Colonic mucosa (tissue), 4 donors: ENCODE measurements at regions of chr2 and their contacts with region 1.

Region 1: DNA sequence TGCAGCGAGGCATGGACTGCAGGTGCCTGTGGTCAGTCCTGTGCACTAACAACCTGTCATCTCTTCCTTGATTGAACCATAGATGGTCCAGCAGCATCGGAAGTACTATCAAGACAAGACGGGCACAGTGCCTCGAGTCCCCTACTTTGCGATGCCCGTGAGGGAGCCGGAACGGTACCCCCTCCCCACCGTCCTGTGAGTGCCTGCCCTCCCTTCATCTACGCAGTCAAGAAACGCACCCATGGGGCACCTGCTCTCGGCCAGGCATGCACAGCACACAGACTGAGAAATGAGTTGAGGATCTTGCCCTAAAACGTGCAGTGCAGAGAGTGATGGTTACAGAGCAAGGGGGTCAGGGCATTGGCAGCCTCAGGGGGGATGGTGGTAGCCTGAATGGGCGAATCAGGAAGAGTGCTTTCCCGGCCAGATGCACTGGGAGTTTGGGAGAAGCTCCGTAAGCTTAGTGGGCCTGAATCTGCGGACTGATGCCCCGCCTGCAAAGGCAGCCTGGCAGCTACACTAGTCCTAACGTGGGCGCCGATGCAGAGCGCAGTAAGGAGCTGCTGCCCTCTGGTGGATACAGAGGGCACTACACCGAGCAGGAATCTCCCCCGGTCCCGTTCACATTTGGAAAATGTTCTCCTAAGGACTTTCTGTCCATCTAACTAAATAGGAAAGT is 63.6 kb downstream of the CIB4 start:
- DNase-seq: peak; percentile 61
- H3K4me3 ChIP-seq: no peak overlapping the region
- H3K27ac ChIP-seq: no peak overlapping the region
- H3K4me1 ChIP-seq: no peaks in the 10 kb centered on the region
- H3K27me3 ChIP-seq: no peaks in the 10 kb centered on the region
- CTCF ChIP-seq: peak; percentile 98

Region 2: GRCh38 chr2:26503231-26503880 is 74.2 kb before region 1 on chr2:
- intact Hi-C with region 1: loop called (anchors 5 kb)
- DNase-seq: peak; percentile 88
- H3K4me3 ChIP-seq: peak overlapping the region; percentile 36
- H3K27ac ChIP-seq: no peak overlapping the region
- H3K4me1 ChIP-seq: peaks cover 6% of the 10 kb centered on the region
- H3K27me3 ChIP-seq: no peaks in the 10 kb centered on the region
- CTCF ChIP-seq: peak; percentile 92

Region 3: DNA sequence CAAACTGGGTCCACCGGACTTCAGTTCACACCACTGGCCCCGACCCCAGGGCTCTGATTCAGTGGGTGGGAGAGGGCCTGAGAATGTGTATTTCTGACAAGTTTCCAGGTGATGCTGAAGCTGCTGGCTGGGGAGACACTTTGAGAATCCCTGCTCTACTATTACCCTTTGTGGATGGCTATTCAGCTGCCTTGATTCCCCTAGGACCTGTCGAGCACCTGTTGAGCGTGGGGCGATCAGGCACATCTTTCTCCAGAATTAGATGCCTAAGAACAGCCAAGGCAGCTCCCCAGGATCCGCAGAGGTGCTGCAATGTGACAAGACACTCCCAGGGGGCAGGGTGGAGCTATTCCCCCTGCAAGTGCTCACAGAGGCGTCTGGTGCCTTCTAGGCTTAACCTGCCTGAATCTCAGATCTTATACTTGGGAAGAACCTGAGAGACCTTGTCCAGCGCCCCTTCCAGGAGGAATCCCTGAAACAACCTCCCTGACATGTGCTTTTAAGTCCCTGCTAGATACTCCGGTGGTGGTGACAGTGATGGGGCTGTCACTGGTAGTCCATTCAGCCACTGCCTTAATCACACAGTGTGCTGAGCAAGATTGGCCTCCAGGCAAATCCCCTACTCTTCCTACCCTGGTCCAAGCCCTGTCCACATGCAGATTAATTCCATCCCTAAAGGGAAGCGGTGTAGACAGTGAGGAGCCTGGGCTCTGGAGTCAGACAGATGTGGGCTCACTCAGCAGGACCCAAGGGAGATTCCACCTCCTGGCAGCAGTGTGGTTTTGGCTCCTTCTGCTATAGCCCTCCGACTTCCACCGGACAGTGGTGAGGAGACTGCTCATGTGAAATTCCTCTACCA is 56.3 kb before region 1 on chr2:
- intact Hi-C with region 1: loop called (anchors 5 kb)
- DNase-seq: no peak
- H3K4me3 ChIP-seq: no peak overlapping the region
- H3K27ac ChIP-seq: no peak overlapping the region
- H3K4me1 ChIP-seq: no peaks in the 10 kb centered on the region
- H3K27me3 ChIP-seq: no peaks in the 10 kb centered on the region
- CTCF ChIP-seq: peak; percentile 36